ENCODE measurements at regions of chr5 and their contacts with region 1.

Region 1: GRCh38 chr5:149990518-149991376 is 9.7 kb downstream of the TIGD6 start:
- DNase-seq: peak; percentile 58 to 72 (median 70)
- H3K4me3 ChIP-seq: no peak overlapping the region
- H3K4me3 Mint-ChIP-seq: no peak overlapping the region
- H3K27ac ChIP-seq: no peak overlapping the region
- H3K27ac Mint-ChIP-seq: peak overlapping the region in 1 of 7 donors; percentile 51
- H3K4me1 ChIP-seq: no peaks in the 10 kb centered on the region
- H3K4me1 Mint-ChIP-seq: no peaks in the 10 kb centered on the region
- H3K27me3 ChIP-seq: no peaks in the 10 kb centered on the region
- H3K27me3 Mint-ChIP-seq: no peaks in the 10 kb centered on the region
- CTCF ChIP-seq: peak; percentile 95

Region 2: GRCh38 chr5:149636851-149637246 is 353.9 kb before region 1 on chr5:
- intact Hi-C with region 1: loop called (anchors 2 to 10 kb)
- DNase-seq: peak; percentile 10 to 67 (median 58)
- H3K4me3 ChIP-seq: no peak overlapping the region
- H3K4me3 Mint-ChIP-seq: no peak overlapping the region
- H3K27ac ChIP-seq: no peak overlapping the region
- H3K27ac Mint-ChIP-seq: no peak overlapping the region
- H3K4me1 ChIP-seq: peaks cover 0 to 4% of the 10 kb centered on the region in 2 donors
- H3K4me1 Mint-ChIP-seq: peaks cover 11% of the 10 kb centered on the region
- H3K27me3 ChIP-seq: no peaks in the 10 kb centered on the region
- H3K27me3 Mint-ChIP-seq: peaks cover 0 to 2% (median 0%) of the 10 kb centered on the region in 3 donors
- CTCF ChIP-seq: peak; percentile 91

Region 3: GRCh38 chr5:149834246-149834855 is 156.4 kb before region 1 on chr5:
- intact Hi-C with region 1: loop called (anchors 2 to 5 kb)
- DNase-seq: peak; percentile 14 to 38 (median 21)
- H3K4me3 ChIP-seq: no peak overlapping the region
- H3K4me3 Mint-ChIP-seq: no peak overlapping the region
- H3K27ac ChIP-seq: no peak overlapping the region
- H3K27ac Mint-ChIP-seq: peak overlapping the region in 1 of 7 donors; percentile 57
- H3K4me1 ChIP-seq: no peaks in the 10 kb centered on the region
- H3K4me1 Mint-ChIP-seq: no peaks in the 10 kb centered on the region
- H3K27me3 ChIP-seq: no peaks in the 10 kb centered on the region
- H3K27me3 Mint-ChIP-seq: no peaks in the 10 kb centered on the region
- CTCF ChIP-seq: peak; percentile 58

Region 4: GRCh38 chr5:149932445-149933350 is 58.0 kb before region 1 on chr5:
- intact Hi-C with region 1: no loop called
- DNase-seq: peak; percentile 10 to 22 (median 12)
- H3K4me3 ChIP-seq: peak overlapping the region in 2 of 3 experiments; percentile 23 to 41
- H3K4me3 Mint-ChIP-seq: peak overlapping the region; percentile 51 to 65
- H3K27ac ChIP-seq: no peak overlapping the region
- H3K27ac Mint-ChIP-seq: peak overlapping the region in 1 of 7 donors; percentile 21
- H3K4me1 ChIP-seq: peaks cover under 1 to 6% of the 10 kb centered on the region in 2 donors
- H3K4me1 Mint-ChIP-seq: peaks cover 13% of the 10 kb centered on the region
- H3K27me3 ChIP-seq: no peaks in the 10 kb centered on the region
- H3K27me3 Mint-ChIP-seq: peaks cover 0 to 3% (median 1%) of the 10 kb centered on the region in 3 donors
- CTCF ChIP-seq: peak; percentile 25

Region 5: DNA sequence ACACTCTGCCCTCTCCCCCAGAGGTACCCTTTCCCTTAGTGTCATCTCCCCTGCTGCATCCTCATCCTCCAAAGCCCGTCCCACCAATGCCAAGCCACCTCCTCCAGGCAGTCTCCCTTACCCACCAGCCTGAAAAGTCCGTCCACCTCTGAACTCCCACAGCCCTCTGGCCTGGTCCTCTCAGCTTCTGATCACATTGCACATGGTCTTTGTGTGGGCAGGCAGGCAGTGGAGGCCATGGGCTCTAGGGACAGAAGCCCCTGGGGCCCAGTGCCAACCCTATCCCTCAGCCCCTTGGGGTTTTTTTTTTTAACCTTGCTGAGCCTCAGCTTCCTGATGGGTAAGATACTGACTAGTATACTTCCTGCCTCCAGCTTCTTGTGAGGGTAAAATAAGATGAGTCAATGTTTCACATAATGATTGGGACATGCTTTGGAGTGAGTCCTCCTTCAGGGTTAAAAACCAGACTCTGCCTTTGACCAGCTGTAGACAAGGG is 76.2 kb after region 1 on chr5:
- intact Hi-C with region 1: no loop called
- DNase-seq: peak; percentile 45 to 80 (median 74)
- H3K4me3 ChIP-seq: peak overlapping the region in 1 of 3 experiments; percentile 4
- H3K4me3 Mint-ChIP-seq: no peak overlapping the region
- H3K27ac ChIP-seq: peak overlapping the region; percentile 52 to 80
- H3K27ac Mint-ChIP-seq: peak overlapping the region; percentile 81 to 94 (median 90)
- H3K4me1 ChIP-seq: peaks cover 73 to 76% of the 10 kb centered on the region in 2 donors
- H3K4me1 Mint-ChIP-seq: peaks cover 73% of the 10 kb centered on the region
- H3K27me3 ChIP-seq: no peaks in the 10 kb centered on the region
- H3K27me3 Mint-ChIP-seq: peaks cover 0 to 2% (median 0%) of the 10 kb centered on the region in 3 donors
- CTCF ChIP-seq: no peak

Measured in CD14-positive monocyte (primary cell).